ENCODE measurements at regions of chr22 and their contacts with region 1.

Region 1: DNA sequence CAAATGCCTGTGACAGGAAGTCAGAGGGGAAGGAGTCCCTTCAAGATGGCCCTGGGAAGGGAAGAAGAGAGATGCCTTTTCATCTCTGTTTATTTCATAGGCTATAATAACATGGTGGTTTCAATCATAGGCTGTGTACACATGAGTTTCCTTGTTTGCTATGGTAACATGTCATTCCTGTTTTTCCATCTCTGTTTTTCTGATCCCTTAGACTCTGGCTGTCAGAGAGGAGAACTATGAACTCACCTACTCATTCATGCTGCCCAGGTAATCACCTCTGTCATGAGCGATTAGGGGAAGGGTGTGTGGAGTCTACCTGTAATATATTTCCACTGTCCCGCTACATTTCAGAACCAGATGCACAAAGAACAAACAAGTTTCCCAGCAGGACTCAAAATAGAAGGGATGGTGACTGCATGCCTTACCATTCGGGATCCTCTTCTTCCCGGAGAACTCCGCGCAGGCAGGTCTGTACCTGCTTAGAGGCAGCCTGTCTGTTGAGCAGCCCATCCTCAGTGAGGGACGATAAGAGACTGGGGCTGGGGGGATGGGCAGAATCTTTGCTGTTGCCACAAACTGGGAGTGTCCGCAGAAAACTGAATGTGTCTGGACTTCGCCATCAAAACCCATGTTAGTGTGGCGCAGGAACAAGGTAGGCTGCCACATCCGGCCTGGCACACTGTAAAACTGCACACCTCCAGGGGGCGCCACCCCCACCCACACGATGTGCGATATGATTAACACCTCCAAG is 7.1 kb upstream of the PEX26 start:
- DNase-seq: no peak
- ATAC-seq: no peak
- H3K4me3 ChIP-seq: no peak overlapping the region
- H3K27ac ChIP-seq: no peak overlapping the region
- H3K4me1 ChIP-seq: peaks cover 0 to 38% (median 7%) of the 10 kb centered on the region in 9 donors
- H3K27me3 ChIP-seq: peaks cover 0 to 7% (median 0%) of the 10 kb centered on the region in 7 donors
- CTCF ChIP-seq: peak in 4 of 9 donors; percentile 9 to 23 (median 13)

Region 2: GRCh38 chr22:17797721-17798559 is 272.8 kb before region 1 on chr22:
- intact Hi-C with region 1: no loop called
- DNase-seq: no peak
- ATAC-seq: peak in 3 of 8 donors; percentile 21 to 37 (median 32)
- H3K4me3 ChIP-seq: no peak overlapping the region
- H3K27ac ChIP-seq: no peak overlapping the region
- H3K4me1 ChIP-seq: peaks cover 0 to 4% (median 0%) of the 10 kb centered on the region in 9 donors
- H3K27me3 ChIP-seq: no peaks in the 10 kb centered on the region
- CTCF ChIP-seq: no peak

Region 3: DNA sequence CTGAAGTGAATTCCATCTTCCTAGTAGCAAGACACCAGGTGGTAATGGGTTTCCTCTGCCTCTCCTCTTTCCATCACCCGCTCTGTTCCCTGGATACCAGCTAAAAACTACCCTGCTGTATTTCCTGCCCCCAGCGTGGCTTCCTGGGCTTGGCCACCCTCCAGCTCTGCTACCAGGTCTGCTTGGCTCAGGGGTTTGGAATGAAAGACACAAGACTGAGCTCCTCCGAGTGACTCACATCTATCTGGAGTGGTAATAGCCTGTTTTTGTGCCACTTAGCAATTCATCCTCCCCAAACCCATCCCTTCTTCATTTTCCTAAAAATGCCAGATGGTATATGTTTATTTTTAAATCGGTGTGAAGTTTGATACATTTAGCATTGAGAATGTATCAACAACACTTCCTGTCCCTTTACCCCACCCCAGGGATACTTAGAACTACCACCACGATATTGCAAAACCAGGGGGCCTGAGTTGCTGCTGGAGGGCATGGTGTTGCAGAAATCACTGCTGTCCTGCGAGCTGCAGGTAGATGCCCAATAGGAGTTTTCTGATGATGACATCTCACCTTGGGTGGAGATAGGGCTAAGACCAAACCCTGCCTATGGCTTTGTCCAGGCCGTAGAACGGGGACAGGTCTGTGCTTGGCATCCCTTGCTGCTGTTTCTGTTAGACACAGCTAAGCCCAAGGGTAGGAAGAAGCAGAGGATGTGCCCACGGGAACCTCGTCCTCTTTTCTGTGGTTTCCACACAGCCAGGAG is 38.9 kb before region 1 on chr22:
- intact Hi-C with region 1: loop called in 3 of 10 experiments (anchors 5 to 10 kb)
- DNase-seq: no peak
- ATAC-seq: peak in 7 of 8 donors; percentile 16 to 77 (median 48)
- H3K4me3 ChIP-seq: no peak overlapping the region
- H3K27ac ChIP-seq: peak overlapping the region in 4 of 10 donors; percentile 32 to 71 (median 52)
- H3K4me1 ChIP-seq: peaks cover 0 to 44% (median 20%) of the 10 kb centered on the region in 9 donors
- H3K27me3 ChIP-seq: peaks cover 0 to 16% (median 0%) of the 10 kb centered on the region in 7 donors
- CTCF ChIP-seq: no peak

Measured in heart right ventricle (tissue), 16 donors.